ENCODE measurements at regions of chr14 and their contacts with region 1.

Region 1: DNA sequence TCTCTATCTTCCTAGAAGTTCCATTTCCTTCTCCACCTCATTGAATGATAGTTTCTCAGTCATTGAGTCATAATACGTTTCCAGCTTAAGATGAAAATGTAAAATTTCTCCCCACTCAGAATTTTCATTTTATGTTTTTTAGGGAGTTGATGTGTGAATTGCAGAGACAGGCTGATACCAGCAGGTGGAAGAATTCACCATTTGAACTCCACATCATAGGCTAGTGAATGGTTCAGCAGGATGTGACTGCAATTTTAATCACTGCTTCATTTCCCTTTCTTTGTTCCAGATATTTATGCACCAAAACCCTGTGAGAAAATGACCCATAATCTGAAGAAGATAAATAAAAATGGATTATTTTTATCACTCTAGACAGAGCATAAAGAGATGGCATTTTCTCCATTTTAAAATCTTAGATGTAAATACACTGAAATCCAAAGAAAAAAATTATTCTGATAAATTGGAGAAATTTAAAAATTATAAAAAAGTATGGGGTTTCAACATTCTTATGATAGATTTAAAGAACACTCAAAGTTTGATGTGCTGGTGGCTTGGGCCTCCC is 10.6 kb upstream of the PYGL start:
- DNase-seq: peak; percentile 12 to 52
- H3K4me3 ChIP-seq: peak overlapping the region; percentile 9; the same call in 1 of the 2 replicates
- H3K27ac ChIP-seq: peak overlapping the region; percentile 84
- H3K4me1 ChIP-seq: peaks cover 31% of the 10 kb centered on the region
- H3K27me3 ChIP-seq: no peaks in the 10 kb centered on the region
- CTCF ChIP-seq: peak; percentile 75

Region 2: GRCh38 chr14:51157012-51157411 is 202.1 kb after region 1 on chr14:
- CTCF ChIA-PET with region 1: no interaction called
- POLR2A ChIA-PET with region 1: no interaction called
- intact Hi-C with region 1: loop called (anchors 10 kb)
- DNase-seq: no peak
- H3K4me3 ChIP-seq: no peak overlapping the region
- H3K27ac ChIP-seq: no peak overlapping the region
- H3K4me1 ChIP-seq: peaks cover 8% of the 10 kb centered on the region
- H3K27me3 ChIP-seq: no peaks in the 10 kb centered on the region
- CTCF ChIP-seq: peak; percentile 64

Region 3: GRCh38 chr14:51219473-51220448 is 264.9 kb after region 1 on chr14:
- CTCF ChIA-PET with region 1: no interaction called
- POLR2A ChIA-PET with region 1: no interaction called
- intact Hi-C with region 1: loop called (anchors 1 kb)
- DNase-seq: no peak
- H3K4me3 ChIP-seq: no peak overlapping the region
- H3K27ac ChIP-seq: no peak overlapping the region
- H3K4me1 ChIP-seq: no peaks in the 10 kb centered on the region
- H3K27me3 ChIP-seq: no peaks in the 10 kb centered on the region
- CTCF ChIP-seq: peak; percentile 76

Region 4: GRCh38 chr14:52086711-52087110 is 1131.8 kb after region 1 on chr14:
- CTCF ChIA-PET with region 1: no interaction called
- POLR2A ChIA-PET with region 1: no interaction called
- intact Hi-C with region 1: no loop called
- DNase-seq: no peak
- H3K4me3 ChIP-seq: no peak overlapping the region
- H3K27ac ChIP-seq: no peak overlapping the region
- H3K4me1 ChIP-seq: peaks cover 4% of the 10 kb centered on the region
- H3K27me3 ChIP-seq: no peaks in the 10 kb centered on the region
- CTCF ChIP-seq: no peak